ENCODE measurements at regions of chr7 and their contacts with region 1.

Region 1: GRCh38 chr7:101856473-101857357 is 39.3 kb downstream of the CUX1 start:
- DNase-seq: peak; percentile 87 to 95
- ATAC-seq: peak; percentile 84 to 88
- H3K4me3 ChIP-seq: peak overlapping the region; percentile 30 to 53 (median 46)
- H3K27ac ChIP-seq: peak overlapping the region; percentile 84 to 93 (median 91)
- H3K4me1 ChIP-seq: peaks cover 57 to 64% of the 10 kb centered on the region in 2 donors
- H3K27me3 ChIP-seq: no peaks in the 10 kb centered on the region
- CTCF ChIP-seq: peak; percentile 51 to 77 (median 76)
- POLR2A ChIP-seq: peak; percentile 31 to 59

Region 2: DNA sequence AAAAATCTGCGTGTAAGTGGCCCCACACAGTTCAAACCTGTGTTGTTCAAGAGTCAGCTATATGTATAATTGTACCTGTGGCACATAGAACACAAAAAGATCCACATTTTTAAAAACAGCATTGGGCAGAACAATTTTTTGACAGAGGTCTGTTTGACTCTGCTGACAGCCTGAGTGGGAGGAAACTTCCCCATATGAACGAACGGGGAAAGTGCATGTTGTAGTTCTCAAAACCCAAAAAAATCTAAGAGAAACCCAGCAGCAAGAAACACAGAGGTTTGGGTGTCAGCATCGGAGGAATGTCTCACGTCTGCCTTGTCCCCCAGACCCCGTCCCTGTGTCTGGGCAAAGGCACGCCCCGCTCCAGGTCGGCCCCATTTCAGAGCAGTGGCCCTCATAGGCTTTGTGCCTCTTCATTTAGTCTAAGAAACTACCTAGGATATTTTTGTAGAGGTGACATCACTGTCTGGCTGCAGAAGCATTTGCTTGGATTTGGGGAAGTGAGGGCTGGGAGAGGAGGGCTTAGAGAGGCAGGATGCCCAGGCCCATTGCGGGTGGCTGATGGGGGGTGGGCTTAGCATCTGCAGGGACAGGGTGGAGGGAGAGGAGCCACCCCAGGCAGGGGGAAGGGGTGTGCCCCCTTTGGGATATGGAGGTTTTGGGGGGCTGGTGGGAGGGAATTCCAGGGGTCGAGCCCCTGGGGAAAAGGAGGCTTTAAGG is 28.3 kb before region 1 on chr7:
- in situ Hi-C with region 1: no loop called
- intact Hi-C with region 1: loop called (anchors 1 kb)
- DNase-seq: no peak
- ATAC-seq: no peak
- H3K4me3 ChIP-seq: no peak overlapping the region
- H3K27ac ChIP-seq: no peak overlapping the region
- H3K4me1 ChIP-seq: peaks cover 41 to 42% of the 10 kb centered on the region in 2 donors
- H3K27me3 ChIP-seq: no peaks in the 10 kb centered on the region
- CTCF ChIP-seq: no peak
- POLR2A ChIP-seq: no peak

Region 3: DNA sequence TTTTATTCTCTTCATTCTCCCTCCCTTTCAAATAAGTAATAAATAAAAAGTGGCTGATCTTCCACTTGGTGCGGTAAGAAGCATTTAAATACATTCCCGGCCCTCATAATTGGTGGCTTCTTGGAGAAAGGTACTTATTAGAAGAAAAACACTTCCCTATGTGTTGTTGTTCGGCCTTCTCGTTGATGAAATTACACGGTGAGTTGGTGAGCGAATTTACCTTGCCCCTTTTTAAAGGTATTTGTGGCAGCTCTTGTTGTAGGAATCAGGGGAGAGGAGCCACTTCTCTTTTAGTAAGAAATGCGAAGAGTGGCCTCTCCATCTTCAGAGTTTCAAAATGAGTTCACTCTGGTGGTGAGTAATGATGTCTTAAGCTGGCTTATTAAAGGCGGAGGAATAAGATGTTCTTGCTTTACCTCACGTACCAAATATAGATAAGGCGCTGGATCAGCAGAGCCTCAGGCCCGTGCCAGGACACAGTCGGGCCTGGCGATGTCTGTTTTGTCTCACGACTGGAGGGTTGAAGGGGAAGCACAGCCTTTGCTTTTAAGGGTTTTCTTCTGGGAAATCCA is 96.6 kb after region 1 on chr7:
- in situ Hi-C with region 1: loop called in 1 of 4 experiments (anchors 10 kb)
- intact Hi-C with region 1: loop called (anchors 5 kb)
- DNase-seq: peak; percentile 76 to 86
- ATAC-seq: peak; percentile 85 to 91
- H3K4me3 ChIP-seq: no peak overlapping the region
- H3K27ac ChIP-seq: peak overlapping the region; percentile 89 to 96 (median 94)
- H3K4me1 ChIP-seq: peaks cover 72 to 73% of the 10 kb centered on the region in 2 donors
- H3K27me3 ChIP-seq: no peaks in the 10 kb centered on the region
- CTCF ChIP-seq: peak in 3 of 5 experiments; percentile 6 to 20 (median 13)
- POLR2A ChIP-seq: peak; percentile 63 to 82

Region 4: DNA sequence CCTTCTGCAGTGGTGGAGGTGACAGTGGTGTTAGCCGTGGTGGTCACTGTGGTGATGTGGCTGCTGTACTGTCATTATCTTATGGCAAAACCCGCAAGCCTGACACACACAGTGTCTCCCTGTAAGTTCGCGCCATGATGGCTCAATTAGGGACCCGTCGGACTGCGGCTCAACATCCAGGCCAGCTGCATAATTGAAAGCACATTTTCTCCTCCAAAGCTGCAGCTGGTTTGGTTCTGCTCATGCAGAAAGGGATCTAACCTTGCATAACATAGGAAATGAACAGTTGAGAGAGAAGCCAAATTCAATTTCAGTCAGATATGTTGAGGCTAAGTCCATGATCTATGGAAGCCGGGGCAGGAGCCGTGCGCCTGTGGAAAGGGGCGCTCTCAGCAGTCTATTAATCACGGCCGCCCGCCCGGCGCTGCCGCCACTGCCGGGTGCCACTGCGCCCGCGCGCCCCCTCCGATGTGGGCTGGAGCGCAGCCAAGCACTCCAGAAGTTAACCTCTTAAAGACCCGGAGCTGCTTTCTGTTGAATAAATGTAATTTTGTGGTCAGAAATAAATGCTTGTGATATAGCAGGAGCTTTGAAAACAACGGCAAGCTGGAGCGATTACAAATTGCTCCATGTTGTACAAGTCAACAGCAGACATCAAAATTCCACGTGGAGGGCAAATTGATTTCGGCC is 188.4 kb after region 1 on chr7:
- in situ Hi-C with region 1: no loop called
- intact Hi-C with region 1: loop called (anchors 10 kb)
- DNase-seq: peak in 1 of 2 donors; percentile 40
- ATAC-seq: peak; percentile 51 to 55
- H3K4me3 ChIP-seq: peak overlapping the region; percentile 17 to 48 (median 41)
- H3K27ac ChIP-seq: peak overlapping the region; percentile 16 to 34 (median 28)
- H3K4me1 ChIP-seq: peaks cover 17 to 19% of the 10 kb centered on the region in 2 donors
- H3K27me3 ChIP-seq: no peaks in the 10 kb centered on the region
- CTCF ChIP-seq: no peak
- POLR2A ChIP-seq: no peak

Measured in gastrocnemius medialis (tissue), 4 donors.